Activated CD4-positive, alpha-beta memory T cell treated with anti-CD3 and anti-CD28 coated beads for 36 hours (primary cell): ENCODE measurements at regions of chr4 and their contacts with region 1.

Region 1: GRCh38 chr4:18593445-18594002 is 572.0 kb upstream of the LCORL start:
- DNase-seq: peak; percentile 48
- H3K4me3 Mint-ChIP-seq: no peak overlapping the region
- H3K27ac Mint-ChIP-seq: no peak overlapping the region
- H3K4me1 Mint-ChIP-seq: peaks cover 5% of the 10 kb centered on the region
- H3K27me3 Mint-ChIP-seq: peaks cover 16% of the 10 kb centered on the region

Region 2: GRCh38 chr4:17544205-17544604 is 1049.3 kb before region 1 on chr4:
- CTCF ChIA-PET with region 1: interaction called, 8 read pairs
- POLR2A ChIA-PET with region 1: no interaction called
- intact Hi-C with region 1: loop called (anchors 1 kb)
- DNase-seq: no peak
- H3K4me3 Mint-ChIP-seq: no peak overlapping the region
- H3K27ac Mint-ChIP-seq: no peak overlapping the region
- H3K4me1 Mint-ChIP-seq: no peaks in the 10 kb centered on the region
- H3K27me3 Mint-ChIP-seq: peaks cover 13% of the 10 kb centered on the region

Region 3: DNA sequence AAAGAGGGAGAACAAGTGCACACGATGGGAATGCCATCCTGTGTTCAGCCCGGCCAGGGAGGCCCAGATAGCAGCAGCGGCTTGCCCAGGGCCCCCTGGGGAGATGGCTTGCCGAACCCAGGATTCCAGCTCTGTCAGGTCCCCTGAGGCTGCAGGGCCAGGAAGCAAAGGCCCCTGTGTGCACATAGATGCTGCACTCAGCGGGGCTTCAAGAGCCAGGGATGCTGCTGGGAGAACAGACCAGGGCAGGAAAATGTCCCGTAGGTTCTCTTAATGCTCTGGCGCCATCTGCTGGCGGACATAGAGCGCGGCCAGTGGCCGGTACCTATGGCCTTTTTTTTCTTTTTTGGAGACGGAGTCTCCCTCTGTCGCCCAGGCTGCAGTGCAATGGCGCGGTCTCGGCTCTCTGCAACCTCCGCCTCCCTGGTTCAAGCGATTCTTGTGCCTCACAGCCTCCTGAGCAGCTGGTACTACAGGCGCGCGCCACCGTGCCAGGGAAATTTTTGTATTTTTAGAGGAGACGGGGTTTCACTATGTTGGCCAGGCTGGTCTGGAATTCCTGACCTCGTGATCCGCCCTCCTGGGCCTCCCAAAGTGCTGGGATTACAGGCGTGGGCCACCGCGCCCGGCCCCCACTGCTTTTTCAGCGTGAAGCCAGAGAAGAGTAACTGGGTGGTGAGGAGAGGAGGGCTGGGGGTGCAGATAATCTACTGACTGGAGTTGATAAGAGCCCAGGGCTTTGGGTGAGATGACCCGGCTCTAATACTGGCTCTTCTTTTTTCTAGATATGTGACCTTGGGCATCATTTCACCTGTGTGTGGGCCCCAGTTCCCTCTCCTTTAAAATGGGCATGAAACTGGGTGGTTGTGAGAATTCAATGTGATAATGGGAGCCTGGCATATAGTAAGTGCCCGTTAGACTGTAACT is 956.6 kb before region 1 on chr4:
- CTCF ChIA-PET with region 1: no interaction called
- POLR2A ChIA-PET with region 1: no interaction called
- intact Hi-C with region 1: loop called (anchors 5 kb)
- DNase-seq: peak; percentile 82
- H3K4me3 Mint-ChIP-seq: no peak overlapping the region
- H3K27ac Mint-ChIP-seq: no peak overlapping the region
- H3K4me1 Mint-ChIP-seq: no peaks in the 10 kb centered on the region
- H3K27me3 Mint-ChIP-seq: no peaks in the 10 kb centered on the region

Region 4: GRCh38 chr4:17817020-17817419 is 776.5 kb before region 1 on chr4:
- CTCF ChIA-PET with region 1: interaction called, 18 read pairs
- POLR2A ChIA-PET with region 1: no interaction called
- intact Hi-C with region 1: no loop called
- DNase-seq: no peak
- H3K4me3 Mint-ChIP-seq: no peak overlapping the region
- H3K27ac Mint-ChIP-seq: no peak overlapping the region
- H3K4me1 Mint-ChIP-seq: peaks cover 15% of the 10 kb centered on the region
- H3K27me3 Mint-ChIP-seq: no peaks in the 10 kb centered on the region